ENCODE measurements at regions of chr1 and their contacts with region 1.

Region 1: GRCh38 chr1:117225967-117226366 is 15.2 kb upstream of the VTCN1 start:
- DNase-seq: no peak
- ATAC-seq: no peak
- H3K4me3 Mint-ChIP-seq: no peak overlapping the region
- H3K27ac Mint-ChIP-seq: no peak overlapping the region
- H3K4me1 Mint-ChIP-seq: no peaks in the 10 kb centered on the region
- H3K27me3 Mint-ChIP-seq: no peaks in the 10 kb centered on the region
- CTCF ChIP-seq: no peak

Region 2: DNA sequence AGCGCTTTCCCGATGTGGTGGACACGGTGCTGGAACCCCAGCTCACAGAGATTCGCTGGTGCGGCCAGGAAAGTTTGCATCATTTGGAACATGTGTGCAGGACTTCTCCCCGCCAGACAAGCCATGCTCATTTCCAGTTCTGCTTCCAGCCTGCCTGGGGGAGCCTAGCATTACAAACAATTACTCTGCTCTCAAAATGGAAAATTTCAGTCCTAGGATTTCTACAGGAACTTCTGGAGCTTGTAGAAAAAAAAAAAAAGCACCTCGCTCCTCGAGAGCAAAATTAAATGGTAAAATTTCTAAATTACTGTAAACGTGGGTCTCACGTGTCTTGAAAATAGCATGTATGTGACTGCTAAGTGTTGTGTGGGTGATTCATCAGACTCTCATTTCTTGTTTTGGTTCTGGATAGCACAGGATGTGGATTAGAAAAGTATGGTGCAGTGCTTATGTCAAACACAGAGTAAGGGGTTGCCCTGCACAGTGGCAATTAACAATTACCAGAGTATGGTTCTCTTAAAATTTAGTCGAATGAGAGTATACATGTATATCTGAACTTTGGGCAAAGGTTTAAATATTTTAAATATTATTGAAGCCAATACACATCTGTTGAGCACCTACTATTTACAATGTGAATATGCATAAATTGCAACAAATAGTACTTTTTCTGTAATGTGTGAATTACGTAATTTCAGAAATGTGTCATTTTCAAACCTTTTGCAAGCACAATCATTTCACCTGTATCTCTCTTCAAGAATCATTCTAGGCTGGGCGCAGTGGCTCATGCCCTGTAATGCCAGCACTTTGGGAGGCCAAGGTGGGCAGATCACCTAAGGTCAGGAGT is 378.1 kb before region 1 on chr1:
- CTCF ChIA-PET with region 1: no interaction called
- POLR2A ChIA-PET with region 1: no interaction called
- intact Hi-C with region 1: no loop called
- DNase-seq: no peak
- ATAC-seq: no peak
- H3K4me3 Mint-ChIP-seq: no peak overlapping the region
- H3K27ac Mint-ChIP-seq: no peak overlapping the region
- H3K4me1 Mint-ChIP-seq: no peaks in the 10 kb centered on the region
- H3K27me3 Mint-ChIP-seq: peaks cover 6% of the 10 kb centered on the region
- CTCF ChIP-seq: no peak

Region 3: GRCh38 chr1:117215733-117216448 is 10.1 kb before region 1 on chr1:
- CTCF ChIA-PET with region 1: no interaction called
- POLR2A ChIA-PET with region 1: interaction called, 10 read pairs
- intact Hi-C with region 1: no loop called
- DNase-seq: no peak
- ATAC-seq: no peak
- H3K4me3 Mint-ChIP-seq: no peak overlapping the region
- H3K27ac Mint-ChIP-seq: no peak overlapping the region
- H3K4me1 Mint-ChIP-seq: no peaks in the 10 kb centered on the region
- H3K27me3 Mint-ChIP-seq: peaks cover 3% of the 10 kb centered on the region
- CTCF ChIP-seq: no peak